Activated CD4-positive, alpha-beta T cell treated with anti-CD3 and anti-CD28 coated beads, Interleukin-2, amount 10 ng/mL, durations not matched to agents 24 days and 14 days (primary cell): ENCODE measurements at regions of chr9 and their contacts with region 1.

Region 1: DNA sequence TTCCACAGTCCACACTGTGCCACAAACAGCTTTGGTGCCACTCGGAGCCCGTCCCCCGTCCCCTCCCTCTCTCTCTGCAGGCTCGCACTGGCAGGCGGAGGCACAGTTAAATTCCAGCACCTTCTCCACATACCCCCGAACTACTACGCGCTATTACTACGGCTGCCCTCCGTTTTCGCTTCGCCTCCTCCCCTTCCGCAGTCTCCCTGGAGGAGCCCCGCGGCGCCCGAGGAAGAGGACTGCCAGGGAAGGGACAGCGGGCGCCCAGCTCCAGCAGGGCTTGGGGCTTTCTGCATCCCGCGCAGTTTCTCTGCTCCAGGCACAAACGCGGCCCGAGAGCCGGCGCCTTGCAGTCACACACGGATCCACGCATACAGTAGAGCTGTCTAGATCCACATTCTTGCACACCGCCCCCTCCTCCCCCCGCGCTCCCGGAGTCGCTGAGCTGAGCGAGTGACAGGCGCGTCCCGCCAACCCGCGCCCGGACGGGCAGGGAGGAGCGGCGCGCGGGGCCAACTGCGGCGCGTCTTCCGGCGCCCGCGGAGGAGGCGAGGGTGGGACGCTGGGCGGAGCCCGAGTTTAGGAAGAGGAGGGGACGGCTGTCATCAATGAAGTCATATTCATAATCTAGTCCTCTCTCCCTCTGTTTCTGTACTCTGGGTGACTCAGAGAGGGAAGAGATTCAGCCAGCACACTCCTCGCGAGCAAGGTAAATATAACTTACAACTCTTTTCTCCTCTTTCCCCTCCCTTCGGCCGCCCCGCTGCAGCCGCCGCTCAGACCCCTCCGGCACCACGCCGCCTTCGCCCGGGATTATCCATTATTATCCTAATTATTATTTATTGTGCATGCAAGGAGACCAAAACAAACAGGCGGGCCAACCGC is at the start of gene SMARCA2:
- DNase-seq: peak; percentile 99
- H3K4me3 Mint-ChIP-seq: peak within 1 kb of the TSS; percentile 98
- H3K27ac Mint-ChIP-seq: peak within 1 kb of the TSS; percentile 97
- H3K4me1 Mint-ChIP-seq: peaks cover 44% of the 10 kb centered on the region
- H3K27me3 Mint-ChIP-seq: peaks cover 11% of the 10 kb centered on the region
- total RNA-seq, gene SMARCA2: 91.4 and 100.0 TPM in 2 replicates

Region 2: GRCh38 chr9:503881-504852 is 1510.8 kb before region 1 on chr9:
- intact Hi-C with region 1: loop called (anchors 10 kb)
- DNase-seq: peak; percentile 94
- H3K4me3 Mint-ChIP-seq: peak within 1 kb of the TSS; percentile 81
- H3K27ac Mint-ChIP-seq: peak within 1 kb of the TSS; percentile 55
- H3K4me1 Mint-ChIP-seq: peaks cover 8% of the 10 kb centered on the region
- H3K27me3 Mint-ChIP-seq: peaks cover 52% of the 10 kb centered on the region

Region 3: DNA sequence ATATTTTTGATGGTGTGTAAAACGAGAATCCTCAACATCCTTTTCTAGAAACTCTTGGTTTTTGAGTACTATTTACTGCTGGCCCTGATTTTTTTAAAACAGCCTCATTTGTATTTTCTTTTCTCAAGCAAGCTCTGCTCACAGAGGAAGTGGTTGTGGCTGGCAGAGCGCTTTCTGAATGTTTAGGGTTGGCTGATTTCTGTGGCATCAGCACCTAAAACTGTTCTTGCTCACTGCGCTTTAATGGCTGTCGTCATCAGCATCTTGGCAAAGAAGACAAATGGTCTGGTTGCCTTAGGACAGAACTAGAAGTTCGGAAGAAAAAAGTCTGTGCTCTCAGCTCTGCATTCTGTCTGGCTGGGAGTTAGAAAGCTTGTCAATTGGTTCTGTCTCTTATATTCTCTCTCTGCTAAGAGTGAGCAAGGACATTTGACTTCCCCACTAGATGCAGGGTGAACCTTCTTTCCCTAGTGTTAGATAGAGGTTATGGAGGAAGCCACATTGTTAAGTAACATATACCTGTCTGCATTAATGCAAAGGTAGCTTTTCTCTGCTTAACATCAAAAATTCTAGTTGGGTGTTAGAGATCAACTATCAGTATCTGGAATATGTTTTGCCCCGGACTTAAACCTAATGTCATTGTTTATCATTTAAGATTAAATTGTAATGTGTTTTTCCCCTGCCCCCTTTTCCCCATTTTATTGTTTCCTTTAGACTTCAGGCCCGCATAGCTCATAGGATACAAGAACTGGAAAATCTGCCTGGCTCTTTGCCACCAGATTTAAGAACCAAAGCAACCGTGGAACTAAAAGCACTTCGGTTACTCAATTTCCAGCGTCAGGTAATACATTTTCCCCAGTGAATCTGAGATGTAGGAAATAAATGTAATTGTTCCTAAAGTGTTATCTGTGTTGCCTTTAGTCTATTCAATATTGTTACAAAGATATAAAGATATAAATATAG is 39.2 kb after region 1 on chr9:
- intact Hi-C with region 1: loop called (anchors 1 kb)
- DNase-seq: peak; percentile 92
- H3K4me3 Mint-ChIP-seq: peak overlapping the region; percentile 61
- H3K27ac Mint-ChIP-seq: peak overlapping the region; percentile 50
- H3K4me1 Mint-ChIP-seq: peaks cover 28% of the 10 kb centered on the region
- H3K27me3 Mint-ChIP-seq: no peaks in the 10 kb centered on the region

Region 4: DNA sequence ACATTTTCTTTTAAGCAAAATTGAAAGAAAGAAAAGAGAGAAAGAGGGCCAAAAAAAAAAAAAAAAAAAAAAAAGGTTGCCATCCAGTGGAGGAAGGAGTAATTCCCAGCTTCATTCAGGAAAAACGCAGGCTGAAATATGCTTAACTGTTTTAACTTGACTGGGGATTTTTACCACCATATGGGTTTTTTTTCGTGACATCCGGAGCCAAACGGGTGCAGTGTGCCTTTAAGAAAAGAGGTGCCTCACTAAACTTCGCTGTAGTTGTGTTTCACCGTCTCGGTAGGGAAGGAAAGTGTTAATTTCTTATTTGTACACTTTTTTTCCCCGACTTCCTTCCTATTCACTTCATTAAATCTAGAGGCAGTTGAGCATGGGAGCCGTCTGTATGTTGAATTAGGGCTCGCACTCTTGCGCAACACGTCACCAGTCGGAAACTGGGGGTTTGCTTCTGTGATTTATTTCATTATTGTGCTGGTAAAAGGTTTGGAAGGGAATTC is 143.2 kb after region 1 on chr9:
- intact Hi-C with region 1: loop called (anchors 5 kb)
- DNase-seq: peak; percentile 80
- H3K4me3 Mint-ChIP-seq: peak overlapping the region; percentile 87
- H3K27ac Mint-ChIP-seq: peak overlapping the region; percentile 95
- H3K4me1 Mint-ChIP-seq: peaks cover 32% of the 10 kb centered on the region
- H3K27me3 Mint-ChIP-seq: no peaks in the 10 kb centered on the region

Region 5: DNA sequence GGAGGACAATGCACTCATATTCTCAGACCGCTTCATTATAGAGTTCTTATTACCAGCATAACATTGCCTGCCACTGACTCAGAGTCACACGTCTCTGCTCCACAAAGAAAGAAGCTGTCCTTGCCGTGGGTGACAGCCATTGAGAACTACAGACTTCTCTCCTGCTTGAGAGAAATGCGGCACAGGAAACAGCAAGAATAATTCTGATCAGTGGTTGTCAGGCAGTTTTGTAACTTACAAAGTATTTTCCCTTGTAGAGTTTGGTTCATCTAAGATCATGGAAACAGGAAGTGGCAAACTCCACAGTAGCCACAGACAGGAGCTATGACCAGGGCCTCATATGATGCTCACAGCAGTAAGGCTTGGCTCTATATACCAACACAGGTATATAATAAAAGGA is 749.4 kb after region 1 on chr9:
- intact Hi-C with region 1: loop called (anchors 10 kb)
- DNase-seq: peak; percentile 85
- H3K4me3 Mint-ChIP-seq: peak overlapping the region; percentile 57
- H3K27ac Mint-ChIP-seq: peak overlapping the region; percentile 91
- H3K4me1 Mint-ChIP-seq: peaks cover 36% of the 10 kb centered on the region
- H3K27me3 Mint-ChIP-seq: no peaks in the 10 kb centered on the region